SK-N-SH (cell line): ENCODE measurements at regions of chr17 and their contacts with region 1.

Region 1: GRCh38 chr17:45021607-45022287 is 29.7 kb downstream of the DCAKD start:
- DNase-seq: peak; percentile 96
- H3K4me3 ChIP-seq: peak overlapping the region in 1 of 2 experiments; percentile 19; a peak in 1 of 4 replicates
- H3K27ac ChIP-seq: peak overlapping the region in 1 of 2 experiments; percentile 77; a peak in 2 of 4 replicates
- H3K4me1 ChIP-seq: peaks cover 10 to 34% of the 10 kb centered on the region in 2 experiments; a peak in 1 of 4 replicates
- H3K27me3 ChIP-seq: no peaks in the 10 kb centered on the region
- CTCF ChIP-seq: peak; percentile 88
- EP300 ChIP-seq: no peak
- RAD21 ChIP-seq: peak; percentile 77

Region 2: DNA sequence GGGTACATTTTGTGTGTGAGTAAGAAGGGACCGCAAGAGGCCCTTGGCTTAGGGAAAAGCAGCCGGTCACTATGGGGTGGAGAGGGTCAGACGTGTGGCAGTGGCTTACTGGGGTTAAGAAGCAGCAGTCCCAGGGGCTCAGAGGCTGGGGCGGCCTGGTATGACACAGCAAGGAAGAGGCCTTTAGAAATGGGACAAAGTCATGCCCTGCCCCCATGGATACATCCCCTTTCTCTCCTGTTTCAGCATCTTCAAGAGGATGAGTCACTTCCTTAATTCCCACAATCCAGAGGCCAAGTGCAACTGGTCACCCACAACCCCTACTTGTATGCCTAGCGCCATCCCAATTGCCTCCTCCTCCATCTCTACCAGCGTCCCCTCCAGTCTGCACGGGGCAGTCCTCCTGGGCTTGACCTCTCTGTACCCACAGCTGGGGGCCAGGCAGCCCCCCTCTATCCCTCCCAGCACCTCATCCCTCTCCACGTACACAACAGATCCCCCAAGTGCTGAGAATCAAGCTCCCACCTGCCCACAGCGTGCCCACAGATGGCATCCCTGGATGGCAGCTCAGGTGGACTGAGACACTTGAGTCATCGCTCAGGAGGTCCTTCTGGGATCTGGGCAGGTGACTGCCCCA is 115.6 kb before region 1 on chr17:
- CTCF ChIA-PET with region 1: interaction called, 79 read pairs
- POLR2A ChIA-PET with region 1: no interaction called
- DNase-seq: no peak
- H3K4me3 ChIP-seq: no peak overlapping the region
- H3K27ac ChIP-seq: peak overlapping the region; percentile 51 to 98; a peak in 3 of 4 replicates
- H3K4me1 ChIP-seq: peaks cover 8 to 47% of the 10 kb centered on the region in 2 experiments; a peak in 3 of 4 replicates
- H3K27me3 ChIP-seq: no peaks in the 10 kb centered on the region
- CTCF ChIP-seq: 0 out of 2 replicates have a peak, but pooled peaks have one; percentile 6
- EP300 ChIP-seq: peak in 1 of 2 experiments; percentile 66; a peak in 1 of 4 replicates
- RAD21 ChIP-seq: no peak

Region 3: GRCh38 chr17:44941712-44942331 is 79.9 kb before region 1 on chr17:
- CTCF ChIA-PET with region 1: interaction called, 15 read pairs
- POLR2A ChIA-PET with region 1: no interaction called
- DNase-seq: peak; percentile 32
- H3K4me3 ChIP-seq: no peak overlapping the region
- H3K27ac ChIP-seq: peak overlapping the region; percentile 3 to 56; a peak in 2 of 4 replicates
- H3K4me1 ChIP-seq: peaks cover 0 to 15% of the 10 kb centered on the region in 2 experiments; a peak in 1 of 4 replicates
- H3K27me3 ChIP-seq: no peaks in the 10 kb centered on the region
- CTCF ChIP-seq: no peak
- EP300 ChIP-seq: no peak
- RAD21 ChIP-seq: no peak

Region 4: GRCh38 chr17:44995436-44996001 is 26.2 kb before region 1 on chr17:
- CTCF ChIA-PET with region 1: interaction called, 11 read pairs
- POLR2A ChIA-PET with region 1: interaction called, 5 read pairs
- DNase-seq: no peak
- H3K4me3 ChIP-seq: no peak overlapping the region
- H3K27ac ChIP-seq: no peak overlapping the region
- H3K4me1 ChIP-seq: no peaks in the 10 kb centered on the region; a peak in 1 of 4 replicates
- H3K27me3 ChIP-seq: no peaks in the 10 kb centered on the region
- CTCF ChIP-seq: no peak
- EP300 ChIP-seq: no peak
- RAD21 ChIP-seq: no peak

Region 5: GRCh38 chr17:45051060-45051719 is 29.4 kb after region 1 on chr17 and contains the start of gene DCAKD:
- CTCF ChIA-PET with region 1: interaction called, 20 read pairs
- POLR2A ChIA-PET with region 1: no interaction called
- DNase-seq: peak; percentile 96
- H3K4me3 ChIP-seq: peak within 1 kb of the TSS; percentile 60 to 79
- H3K27ac ChIP-seq: peak within 1 kb of the TSS; percentile 92
- H3K4me1 ChIP-seq: no peaks in the 10 kb centered on the region; a peak in 1 of 4 replicates
- H3K27me3 ChIP-seq: no peaks in the 10 kb centered on the region
- CTCF ChIP-seq: no peak
- EP300 ChIP-seq: no peak
- RAD21 ChIP-seq: no peak
- polyA plus RNA-seq, gene DCAKD: 47.6 and 48.8 TPM in 2 replicates